A549 (cell line): ENCODE measurements at regions of chr6 and their contacts with region 1.

Region 1: DNA sequence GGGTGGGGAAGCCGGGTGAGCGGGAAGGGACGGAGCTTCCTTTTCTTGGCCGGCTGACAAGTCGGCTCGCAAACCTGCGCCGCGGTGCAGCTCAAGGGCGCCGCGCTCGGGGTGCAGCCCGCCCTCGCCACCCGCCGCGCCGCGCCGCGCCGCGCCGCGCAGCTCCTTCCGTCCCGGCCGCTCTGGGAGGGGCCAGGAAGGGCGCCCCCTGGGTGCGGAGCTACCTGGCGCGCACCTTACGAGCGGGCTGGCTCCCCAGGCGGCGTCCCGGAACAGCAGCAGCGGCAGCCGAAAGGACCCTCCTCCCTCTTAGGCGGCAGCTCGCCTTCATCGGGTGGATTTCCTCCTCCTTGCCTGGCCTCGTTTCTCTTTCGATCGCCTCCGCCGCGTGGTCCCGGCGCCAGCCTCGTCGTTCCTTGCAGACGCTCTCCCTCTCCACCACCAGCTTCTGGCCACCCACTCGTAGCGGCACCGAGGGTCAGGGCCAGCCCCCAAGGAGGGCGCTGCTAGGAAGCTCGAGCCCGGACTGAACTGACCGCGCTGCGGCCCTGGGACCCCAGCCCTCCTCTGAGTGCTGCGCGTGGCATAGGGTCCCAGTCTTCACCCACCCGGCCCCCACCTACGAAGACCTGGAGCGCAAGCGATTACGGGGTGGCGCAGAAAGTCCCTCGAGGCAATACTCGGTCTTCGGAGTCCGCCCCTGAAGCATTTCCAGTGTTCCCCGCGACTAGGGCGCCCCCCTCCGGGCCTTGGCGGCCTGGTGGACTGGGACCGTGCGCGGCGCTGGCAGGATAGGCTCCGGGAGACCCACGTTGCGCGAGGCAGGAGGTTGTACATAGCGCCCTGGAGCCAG is at the start of gene MAP3K5:
- DNase-seq: peak; percentile 36 to 84
- ATAC-seq: peak; percentile 87 to 92
- H3K4me3 ChIP-seq: peak within 1 kb of the TSS; percentile 83
- H3K27ac ChIP-seq: peak within 1 kb of the TSS; percentile 95
- H3K4me1 ChIP-seq: peaks cover 12% of the 10 kb centered on the region; the same call in 2 of the 3 replicates
- CTCF ChIP-seq: peak; percentile 57
- EP300 ChIP-seq: no peak
- POLR2A ChIP-seq: peak; percentile 30
- RAD21 ChIP-seq: peak; percentile 78 to 88
- polyA plus RNA-seq, gene MAP3K5: 4.1 and 4.4 TPM in 2 replicates

Region 2: GRCh38 chr6:136146130-136146529 is 646.5 kb before region 1 on chr6:
- CTCF ChIA-PET with region 1: no interaction called
- POLR2A ChIA-PET with region 1: no interaction called
- DNase-seq: no peak
- ATAC-seq: no peak
- H3K4me3 ChIP-seq: no peak overlapping the region
- H3K27ac ChIP-seq: no peak overlapping the region
- H3K4me1 ChIP-seq: 0 out of 3 replicates have a peak, but pooled peaks cover 7% of the 10 kb centered on the region
- CTCF ChIP-seq: no peak
- EP300 ChIP-seq: no peak
- POLR2A ChIP-seq: no peak
- RAD21 ChIP-seq: no peak

Region 3: GRCh38 chr6:136607932-136608772 is 184.5 kb before region 1 on chr6:
- CTCF ChIA-PET with region 1: interaction called, 17 read pairs
- POLR2A ChIA-PET with region 1: interaction called, 4 read pairs
- DNase-seq: peak; percentile 38 to 70
- ATAC-seq: peak; percentile 52 to 75; a peak in 5 of 6 replicates
- H3K4me3 ChIP-seq: no peak overlapping the region
- H3K27ac ChIP-seq: peak overlapping the region; percentile 73 to 87; a peak in 4 of 6 replicates
- H3K4me1 ChIP-seq: peaks cover 50% of the 10 kb centered on the region
- CTCF ChIP-seq: peak; percentile 49
- EP300 ChIP-seq: no peak
- POLR2A ChIP-seq: no peak
- RAD21 ChIP-seq: peak; percentile 50 to 68

Region 4: GRCh38 chr6:136635615-136636014 is 157.0 kb before region 1 on chr6:
- CTCF ChIA-PET with region 1: interaction called, 146 read pairs
- POLR2A ChIA-PET with region 1: no interaction called
- DNase-seq: no peak
- ATAC-seq: no peak
- H3K4me3 ChIP-seq: no peak overlapping the region
- H3K27ac ChIP-seq: no peak overlapping the region
- H3K4me1 ChIP-seq: peaks cover 5% of the 10 kb centered on the region; the same call in 1 of the 3 replicates
- CTCF ChIP-seq: no peak
- EP300 ChIP-seq: no peak
- POLR2A ChIP-seq: no peak
- RAD21 ChIP-seq: no peak

Region 5: DNA sequence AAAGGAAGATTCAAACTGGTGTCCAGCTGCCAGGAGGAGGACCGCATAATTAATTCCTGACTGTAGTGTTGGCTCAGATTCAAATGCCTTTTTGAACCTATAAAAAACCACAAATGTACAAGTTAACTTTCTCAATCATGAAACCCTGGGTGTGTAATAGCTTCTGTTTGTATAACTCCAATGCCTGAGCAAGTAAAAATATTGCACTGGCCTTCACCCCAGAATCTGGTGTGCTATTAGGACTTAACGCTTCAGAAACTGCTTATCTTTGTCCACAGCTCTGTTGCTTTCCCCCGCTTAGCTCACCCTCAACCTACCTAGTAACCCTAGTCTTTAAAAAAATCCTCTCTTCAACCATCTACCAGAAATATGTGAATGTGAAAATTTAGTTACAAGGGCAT is 123.3 kb before region 1 on chr6:
- CTCF ChIA-PET with region 1: interaction called, 12 read pairs
- POLR2A ChIA-PET with region 1: no interaction called
- DNase-seq: no peak
- ATAC-seq: no peak
- H3K4me3 ChIP-seq: no peak overlapping the region
- H3K27ac ChIP-seq: no peak overlapping the region
- H3K4me1 ChIP-seq: peaks cover 4% of the 10 kb centered on the region; the same call in 1 of the 3 replicates
- CTCF ChIP-seq: no peak
- EP300 ChIP-seq: no peak
- POLR2A ChIP-seq: no peak
- RAD21 ChIP-seq: no peak

Region 6: DNA sequence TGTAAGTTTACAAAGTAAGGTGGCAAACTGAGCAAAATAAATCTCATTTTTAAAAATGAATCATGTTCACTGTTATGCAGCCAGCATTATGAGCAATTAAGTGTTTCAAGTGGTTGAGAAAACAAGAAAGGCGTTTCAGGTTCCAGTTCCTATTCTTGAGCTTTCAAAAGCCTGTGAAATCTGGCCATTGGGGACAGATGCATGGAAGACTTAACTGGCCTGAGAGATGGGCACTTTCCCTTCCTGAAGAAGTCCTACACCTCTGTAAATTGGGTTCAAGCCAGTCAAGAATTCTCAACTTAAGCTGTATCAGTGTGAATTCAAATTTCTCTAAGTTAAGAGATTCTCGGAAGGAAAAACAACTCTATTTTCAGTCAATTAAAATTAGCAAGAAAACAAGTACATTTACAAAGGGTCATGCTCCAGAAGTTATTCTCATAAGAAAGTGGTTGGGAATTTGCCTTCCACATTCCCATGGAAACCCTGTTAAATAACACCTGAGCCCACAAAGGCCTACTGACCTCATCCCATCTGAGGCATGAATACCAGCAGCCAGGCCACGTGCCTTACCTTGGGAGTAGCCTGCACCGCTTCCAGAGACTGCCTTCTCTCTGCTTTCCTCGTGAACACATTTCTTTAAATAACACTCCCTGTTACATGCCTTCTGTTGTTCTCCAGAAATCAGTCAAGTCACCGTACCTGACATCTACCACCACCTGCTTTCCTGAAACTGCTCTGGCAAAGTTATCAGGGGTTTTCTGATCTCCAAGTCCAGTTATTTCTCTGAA is 19.8 kb before region 1 on chr6:
- CTCF ChIA-PET with region 1: interaction called, 18 read pairs
- POLR2A ChIA-PET with region 1: interaction called, 6 read pairs
- DNase-seq: no peak
- ATAC-seq: no peak
- H3K4me3 ChIP-seq: no peak overlapping the region
- H3K27ac ChIP-seq: no peak overlapping the region
- H3K4me1 ChIP-seq: peaks cover 18% of the 10 kb centered on the region
- CTCF ChIP-seq: no peak
- EP300 ChIP-seq: no peak
- POLR2A ChIP-seq: no peak
- RAD21 ChIP-seq: no peak

Region 7: GRCh38 chr6:136866872-136867416 is 74.3 kb after region 1 on chr6:
- CTCF ChIA-PET with region 1: no interaction called
- POLR2A ChIA-PET with region 1: no interaction called
- DNase-seq: no peak
- ATAC-seq: no peak
- H3K4me3 ChIP-seq: no peak overlapping the region
- H3K27ac ChIP-seq: no peak overlapping the region
- H3K4me1 ChIP-seq: no peaks in the 10 kb centered on the region
- CTCF ChIP-seq: no peak
- EP300 ChIP-seq: no peak
- POLR2A ChIP-seq: no peak
- RAD21 ChIP-seq: no peak

Region 8: DNA sequence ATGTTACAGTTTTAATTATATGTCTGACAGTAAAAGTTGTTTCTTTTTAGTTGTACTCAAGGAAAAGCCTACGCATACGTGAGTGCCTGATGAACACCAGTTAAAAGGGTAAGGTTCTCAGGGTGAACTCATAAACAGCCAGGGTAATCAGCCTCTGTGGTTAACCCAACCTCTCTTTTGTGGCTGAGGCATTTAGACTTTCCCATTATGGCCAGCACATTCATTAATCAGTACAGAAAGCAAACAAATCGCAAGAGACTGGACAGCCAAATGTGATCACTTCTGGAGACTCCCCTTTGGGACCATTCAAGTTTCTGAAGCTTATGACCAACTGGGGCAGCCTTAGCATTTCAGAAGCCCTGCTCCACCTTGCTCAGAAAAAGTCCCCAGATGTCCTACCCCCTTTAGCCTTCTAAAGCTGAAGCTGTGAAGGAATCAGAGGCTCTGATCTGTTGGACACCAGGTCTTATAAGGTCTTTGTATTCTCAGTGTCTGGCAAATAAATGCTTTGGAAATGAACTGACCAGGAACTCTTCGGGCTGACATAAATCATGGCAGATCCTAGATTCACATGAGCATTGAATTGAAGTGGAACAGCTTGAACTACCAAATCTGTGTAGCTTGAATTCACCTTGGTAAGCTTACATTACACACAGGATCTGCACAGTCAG is 233.3 kb after region 1 on chr6:
- CTCF ChIA-PET with region 1: no interaction called
- POLR2A ChIA-PET with region 1: no interaction called
- DNase-seq: no peak
- ATAC-seq: no peak
- H3K4me3 ChIP-seq: no peak overlapping the region
- H3K27ac ChIP-seq: no peak overlapping the region
- H3K4me1 ChIP-seq: no peaks in the 10 kb centered on the region
- CTCF ChIP-seq: no peak
- EP300 ChIP-seq: no peak
- POLR2A ChIP-seq: no peak
- RAD21 ChIP-seq: no peak